Heart right ventricle (tissue), 16 donors: ENCODE measurements at regions of chr9 and their contacts with region 1.

Region 1: GRCh38 chr9:37262410-37262809 is 142.0 kb downstream of the ZCCHC7 start:
- DNase-seq: no peak
- ATAC-seq: no peak
- H3K4me3 ChIP-seq: no peak overlapping the region
- H3K27ac ChIP-seq: no peak overlapping the region
- H3K4me1 ChIP-seq: no peaks in the 10 kb centered on the region
- H3K27me3 ChIP-seq: no peaks in the 10 kb centered on the region
- CTCF ChIP-seq: peak in 7 of 9 donors; percentile 33 to 64 (median 50)

Region 2: GRCh38 chr9:36873247-36873875 is 389.0 kb before region 1 on chr9:
- intact Hi-C with region 1: loop called in 5 of 10 experiments (anchors 5 to 10 kb)
- DNase-seq: peak; percentile 45 to 56
- ATAC-seq: peak in 7 of 8 donors; percentile 66 to 81 (median 76)
- H3K4me3 ChIP-seq: no peak overlapping the region
- H3K27ac ChIP-seq: no peak overlapping the region
- H3K4me1 ChIP-seq: no peaks in the 10 kb centered on the region
- H3K27me3 ChIP-seq: peaks cover 4 to 48% (median 21%) of the 10 kb centered on the region in 7 donors
- CTCF ChIP-seq: peak; percentile 62 to 92 (median 85)

Region 3: DNA sequence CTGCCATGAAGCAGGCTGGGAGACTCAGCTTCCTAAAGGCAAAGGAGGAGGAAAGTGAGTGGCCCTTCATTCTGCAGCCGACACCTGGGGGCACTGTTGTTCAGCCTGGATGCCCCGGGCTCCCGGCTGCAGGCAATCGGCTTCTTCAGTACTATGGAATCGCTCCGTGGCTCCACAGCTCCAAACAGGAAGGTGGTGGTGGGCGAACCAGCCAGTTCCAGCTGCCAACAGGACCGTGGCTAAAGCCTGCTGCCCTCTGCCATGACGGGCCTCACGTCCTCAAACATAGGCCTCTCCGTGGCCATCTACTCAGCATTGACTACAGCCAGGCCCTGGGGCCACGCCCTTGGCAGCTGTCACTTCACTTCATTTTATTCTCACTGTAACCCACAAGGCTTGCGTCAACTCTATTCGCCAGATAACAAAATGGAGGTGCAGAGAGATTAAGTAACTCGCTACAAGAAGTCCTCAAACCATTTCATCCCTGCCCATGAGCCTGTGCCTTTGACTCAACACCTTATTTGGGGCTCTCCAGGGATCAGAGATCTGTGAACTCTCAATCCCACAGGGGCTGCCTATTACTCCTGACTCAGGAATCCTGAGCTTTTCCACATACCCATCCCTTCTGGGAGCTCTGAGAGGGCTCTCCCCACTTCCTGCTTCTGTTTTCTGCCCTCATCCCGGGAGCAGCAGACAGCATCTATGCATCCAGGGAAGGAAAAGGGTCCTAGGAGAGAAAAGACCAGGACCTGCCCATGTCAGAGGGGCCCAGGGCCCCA is 266.3 kb before region 1 on chr9:
- intact Hi-C with region 1: loop called in 2 of 10 experiments (anchors 10 kb)
- DNase-seq: peak; percentile 23 to 29
- ATAC-seq: peak in 6 of 8 donors; percentile 62 to 77 (median 70)
- H3K4me3 ChIP-seq: peak overlapping the region in 3 of 10 donors; percentile 3 to 30 (median 29)
- H3K27ac ChIP-seq: no peak overlapping the region
- H3K4me1 ChIP-seq: peaks cover 0 to 6% (median 0%) of the 10 kb centered on the region in 9 donors
- H3K27me3 ChIP-seq: peaks cover 0 to 83% (median 61%) of the 10 kb centered on the region in 7 donors
- CTCF ChIP-seq: peak; percentile 13 to 65 (median 52)